ENCODE measurements at regions of chr5 and their contacts with region 1.

Region 1: DNA sequence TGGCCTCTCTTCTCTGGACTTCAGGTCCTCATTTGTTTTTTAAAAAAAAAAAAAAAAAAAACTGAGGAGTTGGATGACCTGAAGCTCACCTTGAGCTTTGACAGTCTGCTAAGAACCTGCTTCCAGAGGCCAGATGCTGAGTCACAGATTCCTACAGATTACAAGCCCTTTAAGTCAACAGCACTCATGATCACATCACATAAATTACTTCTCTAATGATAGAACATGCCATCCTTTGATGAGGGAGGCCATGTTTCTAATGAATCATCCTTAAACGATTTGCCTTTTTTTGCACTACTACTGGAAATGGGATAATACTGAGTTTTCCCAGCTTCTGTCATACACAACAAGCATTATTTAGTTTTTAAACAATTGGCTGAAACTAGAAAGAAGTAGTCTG is 34.2 kb upstream of the MYOT start:
- DNase-seq: no peak
- H3K4me3 ChIP-seq: no peak overlapping the region
- H3K27ac ChIP-seq: peak overlapping the region in 1 of 2 donors; percentile 35
- H3K4me1 ChIP-seq: peaks cover 8 to 20% of the 10 kb centered on the region in 2 donors
- H3K27me3 ChIP-seq: no peaks in the 10 kb centered on the region
- CTCF ChIP-seq: no peak

Region 2: DNA sequence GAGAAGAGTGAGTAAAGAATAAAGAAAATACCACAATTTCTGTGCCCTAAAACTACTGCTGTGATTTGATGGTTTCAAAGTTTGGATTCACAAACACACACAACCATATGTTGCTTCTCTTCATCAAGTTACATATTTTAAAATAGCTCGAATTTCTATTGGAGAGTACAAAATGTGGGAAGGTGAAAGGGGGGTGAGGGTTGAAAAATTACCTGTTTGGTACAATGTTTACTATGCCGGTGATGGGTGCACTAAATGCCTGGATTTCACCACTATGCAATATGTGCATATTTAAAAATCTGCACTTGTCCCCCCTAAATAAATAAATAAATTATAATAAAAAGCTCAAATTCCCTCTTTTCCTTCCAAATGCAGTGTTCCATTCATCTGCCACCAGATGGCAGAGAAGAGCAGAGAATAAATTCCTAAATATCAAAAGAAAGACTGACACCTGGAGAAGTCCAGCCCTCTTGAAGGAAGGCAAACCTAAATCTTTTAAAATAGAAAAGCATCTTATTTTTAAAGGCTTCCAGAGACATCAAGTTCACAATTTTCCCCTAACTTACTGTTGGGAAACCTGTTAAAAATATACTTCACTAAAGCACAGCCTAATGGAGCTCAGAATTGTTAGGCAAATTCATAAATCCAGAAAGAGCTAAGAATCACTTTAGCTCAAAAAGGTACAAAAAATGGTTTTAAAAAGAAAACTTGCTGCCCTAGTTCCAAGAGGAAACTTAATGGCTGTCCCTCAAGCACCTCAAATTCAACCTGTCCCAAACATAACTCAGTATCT is 54.5 kb before region 1 on chr5:
- intact Hi-C with region 1: no loop called
- DNase-seq: no peak
- H3K4me3 ChIP-seq: no peak overlapping the region
- H3K27ac ChIP-seq: no peak overlapping the region
- H3K4me1 ChIP-seq: no peaks in the 10 kb centered on the region
- H3K27me3 ChIP-seq: no peaks in the 10 kb centered on the region
- CTCF ChIP-seq: peak; percentile 73 to 86 (median 79)

Region 3: DNA sequence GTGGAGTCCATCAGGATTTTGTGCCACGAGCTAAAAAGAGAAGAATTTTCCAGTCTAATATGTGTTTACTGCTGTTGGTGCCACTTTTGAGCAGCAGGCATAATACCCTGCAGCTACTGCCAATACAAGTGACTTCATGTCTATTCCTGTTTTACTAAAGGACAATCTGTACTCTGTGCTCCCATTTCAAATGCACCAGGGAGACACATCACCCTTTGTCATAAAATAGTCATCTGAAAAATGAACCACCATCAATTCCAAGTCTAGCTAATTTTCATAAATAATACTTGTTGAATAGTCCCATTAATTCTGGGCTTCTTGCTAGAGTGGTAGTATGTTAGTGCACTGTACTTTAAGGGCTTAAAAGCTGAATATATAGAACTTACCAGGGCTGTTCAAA is 46.9 kb after region 1 on chr5:
- intact Hi-C with region 1: loop called (anchors 2 kb)
- DNase-seq: peak in 1 of 2 donors; percentile 66
- H3K4me3 ChIP-seq: no peak overlapping the region
- H3K27ac ChIP-seq: peak overlapping the region; percentile 72 to 79
- H3K4me1 ChIP-seq: peaks cover 4 to 5% of the 10 kb centered on the region in 2 donors
- H3K27me3 ChIP-seq: no peaks in the 10 kb centered on the region
- CTCF ChIP-seq: no peak

Region 4: GRCh38 chr5:137888857-137889759 is 55.6 kb after region 1 on chr5 and contains the start of gene PKD2L2:
- intact Hi-C with region 1: loop called (anchors 2 kb)
- DNase-seq: peak; percentile 26 to 90
- H3K4me3 ChIP-seq: peak within 1 kb of the TSS; percentile 62 to 64
- H3K27ac ChIP-seq: peak within 1 kb of the TSS; percentile 87 to 88
- H3K4me1 ChIP-seq: peaks cover 0 to 5% of the 10 kb centered on the region in 2 donors
- H3K27me3 ChIP-seq: no peaks in the 10 kb centered on the region
- CTCF ChIP-seq: peak in 1 of 3 experiments; percentile 16
- total RNA-seq, gene PKD2L2: not detected